GM12878 (cell line): ENCODE measurements at regions of chr12 and their contacts with region 1.

Region 1: GRCh38 chr12:89783357-89784060 is 74.9 kb upstream of the ATP2B1 start:
- DNase-seq: no peak
- ATAC-seq: peak; percentile 66
- H3K4me3 ChIP-seq: no peak overlapping the region
- H3K27ac ChIP-seq: no peak overlapping the region
- H3K4me1 ChIP-seq: peaks cover 4% of the 10 kb centered on the region
- H3K27me3 ChIP-seq: no peaks in the 10 kb centered on the region
- CTCF ChIP-seq: no peak
- EP300 ChIP-seq: no peak
- POLR2A ChIP-seq: no peak
- RAD21 ChIP-seq: no peak

Region 2: DNA sequence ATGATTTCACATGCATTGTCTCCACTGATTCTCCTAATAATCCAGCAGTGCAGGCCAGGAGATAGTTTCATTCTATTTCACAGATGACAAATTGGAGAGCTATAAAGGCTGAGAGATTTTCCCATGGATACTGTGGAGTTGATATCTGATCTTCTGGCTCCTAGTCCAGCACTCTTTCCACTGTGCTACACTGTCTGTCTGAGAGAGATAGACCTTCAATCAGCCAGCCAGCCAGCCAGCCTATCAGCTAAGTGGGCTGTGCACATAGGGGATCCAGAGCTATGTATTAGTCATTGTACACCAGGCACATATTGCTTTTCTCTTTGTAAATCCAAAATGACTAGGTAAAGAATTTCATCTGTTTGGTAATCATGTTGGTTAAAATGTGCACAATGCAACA is 16.9 kb after region 1 on chr12:
- CTCF ChIA-PET with region 1: interaction called, 7 read pairs
- POLR2A ChIA-PET with region 1: no interaction called
- RAD21 ChIA-PET with region 1: interaction called, 5 read pairs
- SMC1A ChIA-PET with region 1: interaction called, 25 read pairs
- in situ Hi-C with region 1: no loop called
- intact Hi-C with region 1: no loop called
- DNase-seq: no peak
- ATAC-seq: peak; percentile 47
- H3K4me3 ChIP-seq: no peak overlapping the region
- H3K27ac ChIP-seq: no peak overlapping the region
- H3K4me1 ChIP-seq: no peaks in the 10 kb centered on the region
- H3K27me3 ChIP-seq: no peaks in the 10 kb centered on the region
- CTCF ChIP-seq: no peak
- EP300 ChIP-seq: no peak
- POLR2A ChIP-seq: no peak
- RAD21 ChIP-seq: no peak